GM12878 (cell line): ENCODE measurements at regions of chr3 and their contacts with region 1.

Region 1: GRCh38 chr3:17412950-17413530 is 329.4 kb downstream of the TBC1D5 start:
- DNase-seq: peak; percentile 41
- ATAC-seq: peak; percentile 98
- H3K4me3 ChIP-seq: no peak overlapping the region
- H3K27ac ChIP-seq: no peak overlapping the region
- H3K4me1 ChIP-seq: no peaks in the 10 kb centered on the region
- H3K27me3 ChIP-seq: no peaks in the 10 kb centered on the region
- CTCF ChIP-seq: peak; percentile 70 to 80 (median 70)
- EP300 ChIP-seq: no peak
- POLR2A ChIP-seq: no peak
- RAD21 ChIP-seq: peak; percentile 93

Region 2: GRCh38 chr3:17258823-17259436 is 154.1 kb before region 1 on chr3:
- CTCF ChIA-PET with region 1: interaction called, 30 read pairs
- POLR2A ChIA-PET with region 1: interaction called, 6 read pairs
- RAD21 ChIA-PET with region 1: interaction called, 14 read pairs
- SMC1A ChIA-PET with region 1: interaction called, 20 read pairs
- in situ Hi-C with region 1: no loop called
- intact Hi-C with region 1: loop called (anchors 1 kb)
- DNase-seq: no peak
- ATAC-seq: peak; percentile 49; the same call in 2 of the 3 replicates
- H3K4me3 ChIP-seq: no peak overlapping the region
- H3K27ac ChIP-seq: no peak overlapping the region
- H3K4me1 ChIP-seq: no peaks in the 10 kb centered on the region
- H3K27me3 ChIP-seq: no peaks in the 10 kb centered on the region
- CTCF ChIP-seq: peak; percentile 54 to 70 (median 65)
- EP300 ChIP-seq: no peak
- POLR2A ChIP-seq: no peak
- RAD21 ChIP-seq: peak; percentile 75

Region 3: DNA sequence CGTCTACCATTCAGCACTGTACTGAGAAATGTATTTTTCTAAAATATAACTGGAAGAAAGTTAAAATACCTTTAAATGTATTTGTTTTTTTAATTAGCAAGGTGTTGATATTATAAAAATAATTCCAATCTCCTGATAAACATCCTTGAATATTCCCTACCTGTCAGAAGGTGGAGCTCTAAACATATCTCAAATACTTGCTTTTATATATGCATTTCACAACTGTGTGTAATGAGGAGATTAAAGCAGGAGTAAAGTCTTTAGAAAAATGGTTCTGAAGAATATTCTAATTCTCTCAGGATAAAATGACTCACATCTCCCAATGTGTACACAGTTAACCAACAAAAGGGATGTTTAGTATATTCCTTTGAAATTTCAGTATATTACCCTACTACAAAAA is 105.6 kb before region 1 on chr3:
- CTCF ChIA-PET with region 1: interaction called, 10 read pairs
- POLR2A ChIA-PET with region 1: no interaction called
- RAD21 ChIA-PET with region 1: no interaction called
- SMC1A ChIA-PET with region 1: interaction called, 5 read pairs
- in situ Hi-C with region 1: no loop called
- intact Hi-C with region 1: loop called (anchors 1 kb)
- DNase-seq: no peak
- ATAC-seq: no peak
- H3K4me3 ChIP-seq: no peak overlapping the region
- H3K27ac ChIP-seq: no peak overlapping the region
- H3K4me1 ChIP-seq: no peaks in the 10 kb centered on the region
- H3K27me3 ChIP-seq: no peaks in the 10 kb centered on the region
- CTCF ChIP-seq: no peak; a peak in 1 of 6 replicates
- EP300 ChIP-seq: no peak
- POLR2A ChIP-seq: no peak
- RAD21 ChIP-seq: peak; percentile 19; the same call in 1 of the 2 replicates

Region 4: DNA sequence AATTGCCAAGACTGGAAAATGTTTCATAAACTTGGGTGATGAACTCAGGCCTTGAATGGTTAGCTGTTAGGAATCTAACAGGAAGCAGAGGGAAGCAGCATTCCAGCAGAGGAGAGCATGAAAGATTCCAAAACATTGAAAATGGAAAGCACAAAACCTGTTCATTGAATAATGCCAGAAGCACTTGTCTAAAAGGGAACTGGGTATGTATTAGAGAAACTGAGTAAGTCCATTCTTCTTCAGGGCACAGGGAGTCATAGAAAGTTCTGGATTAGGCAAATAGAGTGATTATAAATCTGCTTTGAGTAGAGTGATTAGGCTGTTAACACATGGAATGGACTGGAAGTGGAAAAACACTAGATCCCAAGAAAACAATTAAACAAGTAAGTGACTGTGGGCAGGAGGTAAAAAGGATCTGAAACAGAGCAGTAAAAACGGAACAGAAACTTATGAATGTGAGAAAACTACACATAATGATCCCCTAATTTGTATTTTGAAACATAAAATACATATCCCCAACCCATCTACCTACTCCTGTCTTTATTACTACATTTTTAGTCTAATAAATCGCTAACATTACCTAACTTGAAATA is 14.0 kb before region 1 on chr3:
- CTCF ChIA-PET with region 1: interaction called, 21 read pairs
- POLR2A ChIA-PET with region 1: no interaction called
- RAD21 ChIA-PET with region 1: interaction called, 14 read pairs
- SMC1A ChIA-PET with region 1: interaction called, 35 read pairs
- in situ Hi-C with region 1: no loop called
- intact Hi-C with region 1: no loop called
- DNase-seq: peak; percentile 57
- ATAC-seq: peak; percentile 98
- H3K4me3 ChIP-seq: no peak overlapping the region
- H3K27ac ChIP-seq: peak overlapping the region; percentile 68
- H3K4me1 ChIP-seq: peaks cover 15% of the 10 kb centered on the region
- H3K27me3 ChIP-seq: no peaks in the 10 kb centered on the region
- CTCF ChIP-seq: no peak
- EP300 ChIP-seq: peak; percentile 71 to 97; a peak in 3 of 4 replicates
- POLR2A ChIP-seq: no peak
- RAD21 ChIP-seq: no peak

Region 5: GRCh38 chr3:17423786-17424536 is 10.9 kb after region 1 on chr3:
- CTCF ChIA-PET with region 1: interaction called, 57 read pairs
- POLR2A ChIA-PET with region 1: no interaction called
- RAD21 ChIA-PET with region 1: interaction called, 12 read pairs
- SMC1A ChIA-PET with region 1: interaction called, 25 read pairs
- in situ Hi-C with region 1: no loop called
- intact Hi-C with region 1: no loop called
- DNase-seq: no peak
- ATAC-seq: peak; percentile 90
- H3K4me3 ChIP-seq: no peak overlapping the region
- H3K27ac ChIP-seq: no peak overlapping the region
- H3K4me1 ChIP-seq: peaks cover 6% of the 10 kb centered on the region
- H3K27me3 ChIP-seq: no peaks in the 10 kb centered on the region
- CTCF ChIP-seq: no peak
- EP300 ChIP-seq: peak in 1 of 2 experiments; percentile 56; a peak in 1 of 4 replicates
- POLR2A ChIP-seq: no peak
- RAD21 ChIP-seq: no peak

Region 6: DNA sequence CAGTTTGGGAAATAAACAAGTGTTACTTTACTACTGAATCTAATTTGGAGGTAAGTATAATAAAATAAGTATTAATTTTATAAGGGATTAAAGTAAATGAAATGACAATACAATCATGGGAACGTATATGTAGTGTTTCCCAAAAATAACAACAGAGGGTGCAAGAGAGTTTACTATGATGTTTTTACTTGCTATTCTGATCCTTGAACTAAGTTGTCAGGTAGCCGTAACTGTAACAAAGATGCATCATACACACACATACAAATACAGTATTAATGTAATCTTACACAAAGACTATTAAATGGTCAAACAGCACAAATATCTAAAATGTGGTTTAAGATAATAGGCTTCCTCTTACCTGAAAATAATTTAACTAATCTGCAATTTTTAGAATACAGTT is 18.0 kb after region 1 on chr3:
- CTCF ChIA-PET with region 1: interaction called, 57 read pairs
- POLR2A ChIA-PET with region 1: no interaction called
- RAD21 ChIA-PET with region 1: interaction called, 11 read pairs
- SMC1A ChIA-PET with region 1: interaction called, 6 read pairs
- in situ Hi-C with region 1: no loop called
- intact Hi-C with region 1: no loop called
- DNase-seq: no peak
- ATAC-seq: peak; percentile 65
- H3K4me3 ChIP-seq: no peak overlapping the region
- H3K27ac ChIP-seq: no peak overlapping the region
- H3K4me1 ChIP-seq: no peaks in the 10 kb centered on the region
- H3K27me3 ChIP-seq: no peaks in the 10 kb centered on the region
- CTCF ChIP-seq: peak; percentile 14 to 53 (median 34); a peak in 4 of 6 replicates
- EP300 ChIP-seq: no peak
- POLR2A ChIP-seq: no peak
- RAD21 ChIP-seq: peak; percentile 60

Region 7: GRCh38 chr3:17456046-17456445 is 43.0 kb after region 1 on chr3:
- CTCF ChIA-PET with region 1: no interaction called
- POLR2A ChIA-PET with region 1: no interaction called
- RAD21 ChIA-PET with region 1: no interaction called
- SMC1A ChIA-PET with region 1: no interaction called
- in situ Hi-C with region 1: no loop called
- intact Hi-C with region 1: no loop called
- DNase-seq: no peak
- ATAC-seq: no peak
- H3K4me3 ChIP-seq: no peak overlapping the region
- H3K27ac ChIP-seq: no peak overlapping the region
- H3K4me1 ChIP-seq: no peaks in the 10 kb centered on the region
- H3K27me3 ChIP-seq: no peaks in the 10 kb centered on the region
- CTCF ChIP-seq: no peak
- EP300 ChIP-seq: no peak
- POLR2A ChIP-seq: no peak
- RAD21 ChIP-seq: no peak